PC-3 (cell line): ENCODE measurements at regions of chr19 and their contacts with region 1.

Region 1: DNA sequence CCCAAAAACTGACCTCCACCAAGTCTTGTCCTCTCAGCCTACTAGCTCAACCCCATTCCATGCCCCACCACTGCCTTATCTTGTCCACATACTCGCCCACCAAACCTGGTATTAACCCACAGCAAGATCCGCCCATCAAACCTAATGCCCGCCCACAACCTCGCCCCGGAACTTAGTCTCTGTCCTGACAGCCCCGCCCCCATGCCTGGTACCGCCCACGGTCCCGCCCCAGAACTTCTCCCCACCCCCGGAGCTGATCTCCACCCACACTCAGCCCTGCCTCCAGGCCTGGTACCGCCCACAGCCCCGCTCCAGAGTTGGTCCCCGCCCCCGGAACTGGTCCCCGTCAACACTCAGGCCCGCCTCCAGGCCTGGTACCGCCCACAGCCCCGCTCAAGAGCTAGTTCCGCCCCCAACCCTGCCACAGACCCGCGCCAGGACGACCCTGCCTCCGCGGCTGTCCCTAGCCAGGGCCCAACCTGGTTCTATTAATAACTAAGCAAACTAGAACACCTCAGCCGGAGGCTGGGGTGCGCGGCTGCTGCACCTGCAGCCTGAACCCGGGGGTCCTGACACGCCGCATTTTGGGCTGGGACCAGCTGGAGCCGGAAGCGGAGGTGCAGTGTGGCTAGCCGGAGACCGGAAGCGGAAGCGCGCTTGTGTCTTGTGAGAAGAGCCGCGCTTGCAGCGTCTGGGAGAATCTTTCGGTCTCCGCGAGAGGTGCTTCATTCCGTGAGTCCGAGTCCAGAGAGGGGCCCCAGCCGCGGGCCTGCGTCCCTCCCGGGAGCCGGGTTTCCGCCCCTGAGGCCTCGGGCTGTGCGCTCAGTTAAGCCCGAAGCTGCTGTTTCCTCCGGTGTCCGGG is at the start of gene ZNF557:
- DNase-seq: peak; percentile 98
- ATAC-seq: peak; percentile 99
- H3K4me3 ChIP-seq: peak within 1 kb of the TSS; percentile 96
- H3K27ac ChIP-seq: peak within 1 kb of the TSS; percentile 52
- H3K4me1 ChIP-seq: peaks cover 6% of the 10 kb centered on the region; the same call in 1 of the 2 replicates
- H3K27me3 ChIP-seq: no peaks in the 10 kb centered on the region
- CTCF ChIP-seq: no peak
- total RNA-seq, gene ZNF557: 12.9 and 13.7 TPM in 2 replicates

Region 2: DNA sequence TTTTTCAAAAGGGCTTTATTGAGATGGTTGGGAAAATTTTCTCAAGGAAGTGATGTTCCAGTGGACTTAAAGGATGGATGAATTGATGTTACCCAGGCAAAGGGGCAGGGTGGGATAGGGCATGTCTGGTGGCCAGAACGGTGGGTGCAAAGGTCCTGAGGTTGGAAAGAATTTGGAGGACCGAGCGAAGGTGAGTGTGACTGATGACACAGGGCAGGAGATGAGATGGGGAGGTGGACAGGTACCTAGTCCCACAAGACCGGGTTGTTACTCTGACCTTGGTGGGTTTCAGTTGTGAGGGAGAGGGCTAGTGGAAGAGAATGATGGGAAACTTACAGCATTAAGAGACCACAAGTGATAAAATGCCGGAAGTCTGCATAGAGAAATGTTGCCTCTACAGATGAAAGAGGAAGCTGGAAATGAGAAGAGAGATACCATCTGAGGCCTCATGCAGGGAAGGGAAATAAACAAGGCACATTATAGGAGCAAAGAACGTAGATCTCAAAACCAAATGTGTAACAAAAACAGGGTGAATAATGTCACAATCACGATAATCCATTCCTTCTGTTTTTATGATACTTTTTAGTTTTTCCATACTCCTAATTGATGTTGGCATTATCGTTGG is 177.4 kb before region 1 on chr19:
- CTCF ChIA-PET with region 1: no interaction called
- POLR2A ChIA-PET with region 1: interaction called, 11 read pairs
- intact Hi-C with region 1: no loop called
- DNase-seq: no peak
- ATAC-seq: no peak
- H3K4me3 ChIP-seq: no peak overlapping the region
- H3K27ac ChIP-seq: no peak overlapping the region
- H3K4me1 ChIP-seq: no peaks in the 10 kb centered on the region
- H3K27me3 ChIP-seq: peaks cover 60% of the 10 kb centered on the region
- CTCF ChIP-seq: no peak

Region 3: GRCh38 chr19:7004313-7004931 is 64.9 kb before region 1 on chr19:
- CTCF ChIA-PET with region 1: no interaction called
- POLR2A ChIA-PET with region 1: no interaction called
- intact Hi-C with region 1: no loop called
- DNase-seq: peak; percentile 74
- ATAC-seq: peak; percentile 83
- H3K4me3 ChIP-seq: no peak overlapping the region
- H3K27ac ChIP-seq: no peak overlapping the region
- H3K4me1 ChIP-seq: no peaks in the 10 kb centered on the region
- H3K27me3 ChIP-seq: peaks cover 31% of the 10 kb centered on the region
- CTCF ChIP-seq: peak; percentile 75

Region 4: GRCh38 chr19:7115721-7116120 is 46.4 kb after region 1 on chr19:
- CTCF ChIA-PET with region 1: interaction called, 19 read pairs
- POLR2A ChIA-PET with region 1: interaction called, 28 read pairs
- intact Hi-C with region 1: no loop called
- DNase-seq: no peak
- ATAC-seq: no peak
- H3K4me3 ChIP-seq: no peak overlapping the region
- H3K27ac ChIP-seq: no peak overlapping the region
- H3K4me1 ChIP-seq: no peaks in the 10 kb centered on the region
- H3K27me3 ChIP-seq: no peaks in the 10 kb centered on the region
- CTCF ChIP-seq: no peak

Region 5: DNA sequence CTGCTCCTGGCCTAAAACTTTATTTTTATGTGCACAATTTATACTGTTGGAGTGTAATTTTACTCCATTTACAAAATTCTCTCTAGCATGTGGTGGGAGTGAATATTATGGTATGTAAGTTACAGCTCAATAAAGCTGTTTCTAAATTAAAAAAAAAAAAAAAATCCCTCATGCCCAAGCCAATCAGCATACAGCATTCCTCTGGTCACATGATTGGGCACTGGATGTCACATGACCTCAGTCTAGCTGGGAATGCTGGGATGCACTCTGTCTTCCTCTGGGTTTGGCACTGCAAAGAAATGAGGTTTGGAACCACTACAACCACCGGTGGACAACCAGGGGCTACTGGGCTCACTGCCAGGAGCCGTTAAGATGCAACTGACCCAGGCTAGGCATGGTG is 67.8 kb after region 1 on chr19:
- CTCF ChIA-PET with region 1: no interaction called
- POLR2A ChIA-PET with region 1: no interaction called
- intact Hi-C with region 1: no loop called
- DNase-seq: no peak
- ATAC-seq: no peak
- H3K4me3 ChIP-seq: no peak overlapping the region
- H3K27ac ChIP-seq: no peak overlapping the region
- H3K4me1 ChIP-seq: peaks cover 41% of the 10 kb centered on the region
- H3K27me3 ChIP-seq: no peaks in the 10 kb centered on the region
- CTCF ChIP-seq: no peak

Region 6: GRCh38 chr19:7595466-7596133 is 526.3 kb after region 1 on chr19 and contains the start of gene CAMSAP3:
- CTCF ChIA-PET with region 1: no interaction called
- POLR2A ChIA-PET with region 1: interaction called, 15 read pairs
- intact Hi-C with region 1: no loop called
- DNase-seq: peak; percentile 73
- ATAC-seq: peak; percentile 89
- H3K4me3 ChIP-seq: peak within 1 kb of the TSS; percentile 78
- H3K27ac ChIP-seq: no peak within 1 kb of the TSS
- H3K4me1 ChIP-seq: peaks cover 16% of the 10 kb centered on the region
- H3K27me3 ChIP-seq: no peaks in the 10 kb centered on the region
- CTCF ChIP-seq: no peak
- total RNA-seq, gene CAMSAP3: 16.6 and 25.4 TPM in 2 replicates